ENCODE measurements at regions of chrX and their contacts with region 1.

Region 1: DNA sequence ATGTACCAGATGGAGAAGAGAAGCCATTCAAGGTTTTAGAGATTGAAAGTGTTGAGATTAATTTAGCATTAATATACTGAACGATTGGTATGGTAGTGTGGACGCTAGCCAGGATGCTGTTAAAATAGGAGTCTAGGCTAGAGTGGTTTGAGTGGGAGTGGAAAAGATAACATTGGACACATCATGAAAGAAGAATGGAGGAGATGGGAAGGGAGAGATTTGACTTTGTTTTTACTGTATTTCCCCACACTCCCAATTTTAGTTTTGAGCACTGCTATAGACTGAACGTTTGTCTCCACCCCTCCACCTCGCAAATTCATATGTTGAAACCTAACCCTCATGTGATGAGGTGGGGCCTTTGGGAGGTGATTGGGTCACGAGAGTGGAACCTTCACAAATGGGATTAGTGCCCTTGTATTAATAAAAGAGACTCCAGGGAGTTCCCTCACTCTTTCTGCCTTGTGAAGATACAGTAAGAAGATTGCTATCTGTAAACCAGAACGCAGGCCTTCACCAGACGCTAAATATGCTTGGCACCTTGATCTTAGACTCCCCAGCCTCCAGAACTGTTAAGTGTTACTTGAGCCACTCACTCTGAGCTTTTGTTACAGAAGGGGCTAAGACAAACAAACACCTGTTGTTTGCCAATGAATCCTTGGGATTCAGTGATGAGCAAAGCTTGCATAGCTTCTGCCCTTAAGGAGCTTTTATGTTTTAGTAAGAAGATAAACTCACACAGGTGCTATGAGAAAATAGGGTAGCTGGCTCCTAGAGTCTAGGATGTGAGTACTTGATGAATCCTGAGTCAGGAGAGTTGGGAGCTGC is 25.8 kb downstream of the USP9X start:
- DNase-seq: no peak
- ATAC-seq: no peak
- H3K4me3 ChIP-seq: no peak overlapping the region
- H3K27ac ChIP-seq: no peak overlapping the region
- H3K4me1 ChIP-seq: peaks cover 0 to 70% (median 44%) of the 10 kb centered on the region in 9 donors
- H3K27me3 ChIP-seq: peaks cover 0 to 6% (median 0%) of the 10 kb centered on the region in 7 donors
- CTCF ChIP-seq: no peak

Region 2: GRCh38 chrX:40735325-40736169 is 375.5 kb before region 1 on chrX and contains the start of gene MED14:
- intact Hi-C with region 1: no loop called
- DNase-seq: peak; percentile 84 to 87
- ATAC-seq: peak; percentile 96 to 99 (median 99)
- H3K4me3 ChIP-seq: peak within 1 kb of the TSS; percentile 65 to 88 (median 74)
- H3K27ac ChIP-seq: peak within 1 kb of the TSS; percentile 91 to 99 (median 96)
- H3K4me1 ChIP-seq: peaks cover 0 to 39% (median 22%) of the 10 kb centered on the region in 9 donors
- H3K27me3 ChIP-seq: peaks cover 0 to 85% (median 0%) of the 10 kb centered on the region in 7 donors
- CTCF ChIP-seq: peak in 8 of 9 donors; percentile 31 to 62 (median 50)
- total RNA-seq, gene MED14: 23.9 to 44.9 (median 36.1) TPM

Region 3: GRCh38 chrX:40887476-40887875 is 223.5 kb before region 1 on chrX:
- intact Hi-C with region 1: loop called in 2 of 10 experiments (anchors 5 to 10 kb)
- DNase-seq: no peak
- ATAC-seq: no peak
- H3K4me3 ChIP-seq: no peak overlapping the region
- H3K27ac ChIP-seq: no peak overlapping the region
- H3K4me1 ChIP-seq: no peaks in the 10 kb centered on the region
- H3K27me3 ChIP-seq: peaks cover 0 to 23% (median 0%) of the 10 kb centered on the region in 7 donors
- CTCF ChIP-seq: no peak